ENCODE measurements at regions of chr1 and their contacts with region 1.

Region 1: DNA sequence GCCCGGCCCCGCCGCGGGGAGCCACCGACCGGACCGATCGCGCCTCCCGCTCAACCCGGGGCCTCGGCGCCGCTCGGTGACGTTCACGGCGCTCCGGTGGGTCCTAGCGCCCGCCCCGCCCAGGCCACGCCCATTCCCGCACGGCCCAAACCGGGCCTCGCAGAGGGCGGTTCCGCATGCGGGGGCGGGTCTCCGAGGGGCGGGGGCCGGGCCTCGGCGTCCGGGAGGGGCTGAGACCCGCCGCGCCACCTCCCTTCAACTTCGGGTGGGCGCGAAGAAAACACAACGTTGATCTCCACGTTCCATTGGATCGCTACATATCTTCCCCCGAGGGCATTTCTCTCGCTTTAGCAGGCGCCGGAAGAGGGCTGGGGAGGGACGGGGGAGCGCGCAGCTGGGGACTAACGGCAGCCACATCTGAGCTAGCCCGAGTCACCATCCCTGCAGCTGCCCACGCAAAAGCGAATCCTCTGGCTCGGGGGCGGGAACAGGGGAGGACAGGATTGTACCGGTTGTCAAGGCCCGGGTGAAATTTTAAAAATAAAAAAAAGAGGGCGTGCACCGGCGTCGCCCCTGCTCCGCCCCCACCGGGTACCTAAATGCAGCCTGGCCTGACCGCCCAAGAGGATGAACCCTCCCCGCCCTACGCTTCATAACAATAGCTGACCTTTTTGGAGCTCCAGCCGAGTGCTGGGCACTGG is at the start of gene MAD2L2:
- DNase-seq: peak; percentile 95
- total RNA-seq, gene MAD2L2: 25.0 TPM

Region 2: GRCh38 chr1:11719313-11720032 is 38.3 kb after region 1 on chr1:
- intact Hi-C with region 1: loop called (anchors 5 kb)
- DNase-seq: peak; percentile 93

Region 3: GRCh38 chr1:12047120-12047876 is 366.1 kb after region 1 on chr1:
- intact Hi-C with region 1: no loop called
- DNase-seq: no peak